ENCODE measurements at regions of chr1 and their contacts with region 1.

Region 1: DNA sequence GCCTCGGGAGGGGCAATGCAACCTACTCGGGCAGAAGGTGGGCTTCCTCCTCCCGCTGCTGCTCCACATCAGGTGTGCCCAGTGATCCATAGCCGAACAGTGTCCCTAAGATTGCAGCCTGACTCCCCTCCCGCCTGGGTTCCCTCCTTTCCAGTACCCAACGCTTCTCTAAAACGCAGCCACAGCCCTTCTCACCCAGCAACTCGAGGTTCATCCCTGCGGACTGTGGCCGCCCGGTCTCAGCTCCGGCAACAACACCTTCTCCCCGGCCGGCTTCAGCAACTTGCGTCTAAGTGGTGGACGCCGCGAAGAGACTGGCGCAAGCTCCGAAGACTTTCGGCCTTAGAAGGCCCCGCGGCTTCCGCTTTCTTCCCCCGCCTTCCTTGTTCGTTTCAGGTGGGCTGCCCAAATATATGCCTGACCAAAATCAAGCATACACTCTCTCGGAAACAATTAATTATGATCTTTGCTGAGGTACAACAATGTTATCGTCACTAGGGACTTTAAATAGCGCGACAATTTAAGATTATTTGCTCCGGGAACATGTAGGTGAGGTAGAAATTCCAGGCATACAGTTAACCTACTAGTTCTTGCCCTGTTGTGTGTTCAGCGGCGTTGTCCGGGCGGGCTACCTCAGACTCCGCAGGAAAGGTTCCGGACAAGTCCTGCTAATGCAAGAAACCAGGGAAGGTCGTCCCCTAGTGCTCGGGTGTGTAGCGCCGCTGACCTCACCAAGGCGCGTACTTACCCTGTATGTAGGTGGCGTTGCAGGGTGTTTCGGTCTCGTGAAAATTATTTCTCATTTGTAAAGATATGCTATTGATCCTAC is at the start of gene RBBP5:
- DNase-seq: peak; percentile 100
- H3K4me3 Mint-ChIP-seq: peak within 1 kb of the TSS; percentile 96
- H3K27ac Mint-ChIP-seq: peak within 1 kb of the TSS; percentile 100
- H3K4me1 Mint-ChIP-seq: peaks cover 11% of the 10 kb centered on the region
- H3K27me3 Mint-ChIP-seq: no peaks in the 10 kb centered on the region
- CTCF ChIP-seq: peak; percentile 90
- total RNA-seq, gene RBBP5: 24.8 and 30.4 TPM in 2 replicates

Region 2: DNA sequence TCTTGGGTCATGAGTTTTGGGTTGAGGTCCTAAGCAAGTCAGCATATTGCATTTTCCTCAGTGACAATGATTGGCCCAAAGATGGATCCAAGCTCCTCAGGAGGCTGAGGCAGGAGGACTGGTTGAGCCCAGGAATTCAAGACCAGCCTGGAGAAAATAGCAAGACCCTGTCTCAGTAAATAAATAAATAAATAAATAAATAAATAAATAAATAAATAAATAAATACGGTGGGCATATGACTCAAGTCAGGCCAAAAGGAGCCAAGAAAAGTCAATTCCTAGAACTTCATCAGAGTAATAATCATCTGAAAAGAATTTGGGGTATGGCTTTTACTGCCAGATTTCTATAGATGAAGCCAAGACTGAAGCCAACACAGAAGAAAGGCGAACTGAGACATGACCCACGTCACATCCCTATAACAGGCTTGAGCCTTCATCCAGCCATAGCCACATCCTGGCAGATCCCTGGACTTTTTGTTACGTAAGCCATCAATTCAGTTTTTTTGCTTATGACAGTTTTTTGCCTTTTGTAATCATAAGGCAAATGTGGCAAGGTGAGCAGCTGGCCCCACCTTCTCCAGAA is 339.7 kb before region 1 on chr1:
- CTCF ChIA-PET with region 1: no interaction called
- POLR2A ChIA-PET with region 1: no interaction called
- intact Hi-C with region 1: no loop called
- DNase-seq: peak; percentile 27
- H3K4me3 Mint-ChIP-seq: no peak overlapping the region
- H3K27ac Mint-ChIP-seq: no peak overlapping the region
- H3K4me1 Mint-ChIP-seq: no peaks in the 10 kb centered on the region
- H3K27me3 Mint-ChIP-seq: peaks cover 54% of the 10 kb centered on the region
- CTCF ChIP-seq: no peak

Region 3: DNA sequence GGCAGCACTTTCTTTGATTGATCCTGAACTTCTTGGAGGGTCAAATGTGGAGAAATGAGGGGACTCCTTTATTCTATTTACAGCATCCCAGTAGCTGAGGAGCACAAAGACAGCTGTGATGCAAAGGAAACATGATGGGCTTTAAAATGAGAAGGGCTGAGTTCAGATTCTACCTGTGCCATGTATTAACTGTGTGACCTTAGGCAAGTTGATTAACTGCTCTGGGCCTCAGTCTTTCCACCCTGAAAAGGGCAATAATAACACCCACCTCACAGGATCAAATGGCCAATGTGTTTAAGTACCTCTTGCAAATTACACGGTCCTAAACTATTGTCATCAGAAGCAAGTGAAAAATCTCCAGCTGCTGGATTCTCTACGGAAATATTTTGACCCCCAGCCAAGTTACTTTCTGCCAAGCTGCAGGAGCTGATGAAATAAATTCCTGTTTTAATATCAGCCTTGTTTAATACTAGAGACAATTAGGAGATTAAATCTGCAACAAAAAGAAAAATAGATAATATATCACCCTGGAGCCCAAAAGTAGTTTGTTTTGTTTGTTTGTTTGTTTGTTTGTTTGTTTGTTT is 53.3 kb before region 1 on chr1:
- CTCF ChIA-PET with region 1: interaction called, 45 read pairs
- POLR2A ChIA-PET with region 1: interaction called, 53 read pairs
- intact Hi-C with region 1: loop called (anchors 5 kb)
- DNase-seq: no peak
- H3K4me3 Mint-ChIP-seq: no peak overlapping the region
- H3K27ac Mint-ChIP-seq: no peak overlapping the region
- H3K4me1 Mint-ChIP-seq: peaks cover 18% of the 10 kb centered on the region
- H3K27me3 Mint-ChIP-seq: no peaks in the 10 kb centered on the region
- CTCF ChIP-seq: no peak

Region 4: DNA sequence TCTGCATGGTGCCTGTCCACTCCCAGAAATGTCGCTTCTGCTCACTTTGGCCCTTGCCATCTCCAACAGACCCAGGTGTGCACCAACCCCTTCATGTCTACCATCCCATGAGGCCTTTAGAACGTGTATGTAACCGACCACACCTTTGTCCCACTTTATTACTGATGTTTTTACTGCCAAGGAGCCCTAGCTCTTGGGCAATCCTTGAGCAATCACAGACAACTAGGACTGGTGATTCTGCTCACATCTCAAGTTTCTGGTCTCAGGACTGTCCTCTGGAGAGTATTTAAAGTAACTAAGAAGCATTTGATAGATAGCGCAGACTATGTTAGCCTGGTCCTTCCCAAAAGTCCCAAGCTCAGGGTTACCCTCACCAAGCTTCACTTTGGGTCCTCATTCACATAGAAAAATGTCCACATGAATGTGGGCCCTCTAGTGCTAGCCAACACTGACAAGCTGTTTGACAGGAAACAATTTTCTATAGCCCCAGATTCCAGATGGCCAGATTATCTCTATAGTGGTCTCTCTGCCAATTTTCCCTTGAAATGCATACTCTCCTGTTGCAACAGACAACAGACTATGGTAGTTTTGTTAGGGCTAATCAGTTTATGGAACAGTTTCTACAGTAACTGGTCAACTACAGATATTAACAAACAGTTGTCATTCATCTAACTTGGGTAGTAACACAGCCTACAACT is 30.7 kb before region 1 on chr1:
- CTCF ChIA-PET with region 1: interaction called, 6 read pairs
- POLR2A ChIA-PET with region 1: interaction called, 52 read pairs
- intact Hi-C with region 1: no loop called
- DNase-seq: peak; percentile 75
- H3K4me3 Mint-ChIP-seq: no peak overlapping the region
- H3K27ac Mint-ChIP-seq: peak overlapping the region; percentile 40
- H3K4me1 Mint-ChIP-seq: peaks cover 15% of the 10 kb centered on the region
- H3K27me3 Mint-ChIP-seq: no peaks in the 10 kb centered on the region
- CTCF ChIP-seq: no peak

Region 5: DNA sequence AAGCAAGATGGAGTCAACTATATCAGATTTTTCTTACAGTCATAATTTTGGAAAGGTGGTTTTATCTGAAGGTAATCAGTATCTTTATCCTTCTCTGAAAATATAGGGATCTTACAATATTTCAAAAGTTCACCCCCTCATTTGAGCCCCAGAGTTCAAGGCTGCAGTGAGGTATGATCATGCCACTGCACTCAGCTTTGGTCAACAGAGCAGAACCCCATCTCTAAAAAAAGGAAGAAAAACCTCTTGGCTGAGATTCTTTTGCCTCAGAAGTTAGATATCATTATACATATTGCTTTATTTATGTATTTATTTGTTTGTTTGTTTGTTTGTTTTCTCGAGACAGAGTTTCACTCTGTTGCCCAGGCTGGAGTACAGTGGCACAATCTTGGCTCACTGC is 11.4 kb after region 1 on chr1:
- CTCF ChIA-PET with region 1: interaction called, 231 read pairs
- POLR2A ChIA-PET with region 1: interaction called, 24 read pairs
- intact Hi-C with region 1: no loop called
- DNase-seq: no peak
- H3K4me3 Mint-ChIP-seq: no peak overlapping the region
- H3K27ac Mint-ChIP-seq: no peak overlapping the region
- H3K4me1 Mint-ChIP-seq: no peaks in the 10 kb centered on the region
- H3K27me3 Mint-ChIP-seq: no peaks in the 10 kb centered on the region
- CTCF ChIP-seq: no peak

Region 6: DNA sequence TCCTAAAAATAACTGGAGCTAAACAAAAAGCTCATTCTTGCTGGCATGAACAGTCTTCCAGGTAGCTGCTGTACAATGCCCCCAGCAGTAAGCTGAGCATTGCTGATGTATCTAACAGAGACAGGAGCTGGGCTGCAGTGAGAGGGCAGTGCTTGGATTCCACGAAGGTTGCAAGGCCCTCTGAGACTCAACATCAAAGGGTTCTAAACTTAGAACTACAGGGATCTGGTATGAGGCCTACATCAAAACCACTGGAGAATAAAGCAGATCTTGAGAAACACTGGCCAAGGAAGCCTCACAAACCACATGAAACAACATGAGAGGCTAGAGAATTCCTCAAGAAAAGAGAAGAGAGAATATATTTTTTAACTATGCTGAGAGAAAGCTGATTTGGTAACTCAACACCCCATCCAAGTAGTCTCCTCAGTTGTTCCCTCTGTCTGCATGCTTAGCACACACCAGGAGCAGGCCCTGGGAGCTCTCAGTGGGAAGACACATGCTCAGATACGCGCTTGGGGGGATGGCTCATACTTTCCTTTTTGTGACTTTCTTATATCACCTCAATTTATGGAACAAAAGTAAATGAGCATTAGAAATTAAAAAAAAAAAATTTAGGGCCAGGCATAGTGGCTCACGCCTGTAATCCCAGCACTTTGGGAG is 61.9 kb after region 1 on chr1:
- CTCF ChIA-PET with region 1: interaction called, 3 read pairs
- POLR2A ChIA-PET with region 1: interaction called, 42 read pairs
- intact Hi-C with region 1: no loop called
- DNase-seq: no peak
- H3K4me3 Mint-ChIP-seq: no peak overlapping the region
- H3K27ac Mint-ChIP-seq: peak overlapping the region; percentile 29
- H3K4me1 Mint-ChIP-seq: peaks cover 14% of the 10 kb centered on the region
- H3K27me3 Mint-ChIP-seq: no peaks in the 10 kb centered on the region
- CTCF ChIP-seq: no peak

Region 7: GRCh38 chr1:205255941-205256780 is 134.3 kb after region 1 on chr1:
- CTCF ChIA-PET with region 1: interaction called, 102 read pairs
- POLR2A ChIA-PET with region 1: interaction called, 43 read pairs
- intact Hi-C with region 1: loop called (anchors 1 kb)
- DNase-seq: peak; percentile 95
- H3K4me3 Mint-ChIP-seq: no peak overlapping the region
- H3K27ac Mint-ChIP-seq: no peak overlapping the region
- H3K4me1 Mint-ChIP-seq: peaks cover 31% of the 10 kb centered on the region
- H3K27me3 Mint-ChIP-seq: no peaks in the 10 kb centered on the region
- CTCF ChIP-seq: peak; percentile 100